IMR-90 (cell line): ENCODE measurements at regions of chr5 and their contacts with region 1.

Region 1: GRCh38 chr5:154857530-154858296 is 714 bp upstream of the CNOT8 start:
- DNase-seq: peak; percentile 96
- ATAC-seq: peak; percentile 81
- H3K4me3 ChIP-seq: peak overlapping the region; percentile 61
- H3K27ac ChIP-seq: peak overlapping the region; percentile 94
- H3K4me1 ChIP-seq: peaks cover 1% of the 10 kb centered on the region; the same call in 1 of the 2 replicates
- H3K27me3 ChIP-seq: no peaks in the 10 kb centered on the region
- CTCF ChIP-seq: 0 out of 2 replicates have a peak, but pooled peaks have one; percentile 0
- POLR2A ChIP-seq: peak; percentile 80
- RAD21 ChIP-seq: no peak

Region 2: DNA sequence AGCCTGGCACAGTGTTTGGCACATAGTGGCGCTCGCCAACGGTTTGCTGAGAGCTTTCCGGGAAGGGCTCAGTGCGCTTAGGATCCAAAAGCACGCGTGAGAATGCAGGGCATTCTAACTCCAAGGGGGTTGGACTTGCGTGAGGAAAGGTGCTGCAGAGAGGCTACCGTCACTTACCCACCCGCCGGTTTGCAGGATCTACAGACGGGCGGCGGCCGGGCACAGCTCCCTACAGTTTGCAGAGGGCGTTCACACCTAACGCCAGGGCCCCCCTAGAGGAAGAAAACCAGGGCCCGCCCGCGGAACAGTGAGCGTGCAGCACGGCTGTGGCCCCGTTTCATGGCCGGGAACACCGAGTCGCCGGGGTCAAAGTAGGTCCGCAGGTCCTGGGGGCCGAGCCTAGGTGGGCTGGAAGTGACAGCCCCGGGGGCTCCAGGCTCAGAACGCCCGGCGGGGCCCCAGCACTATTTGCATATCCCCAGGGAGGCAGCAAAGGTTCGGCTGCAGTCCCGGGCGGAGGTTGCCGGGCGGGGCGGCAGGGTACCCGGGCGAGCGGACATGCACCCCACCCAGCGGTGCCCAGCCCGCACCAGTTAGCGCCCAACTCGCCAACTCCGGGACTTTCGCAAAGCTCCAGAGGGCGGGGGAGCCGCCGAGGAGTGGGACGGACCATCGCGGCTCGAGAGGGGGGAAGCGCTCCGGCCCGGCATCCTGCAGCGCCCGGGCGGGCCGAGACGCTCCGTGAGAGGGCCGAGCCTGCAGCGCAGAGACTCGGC is 667.7 kb before region 1 on chr5:
- CTCF ChIA-PET with region 1: no interaction called
- POLR2A ChIA-PET with region 1: no interaction called
- dilution Hi-C with region 1: no loop called
- in situ Hi-C with region 1: no loop called
- intact Hi-C with region 1: loop called (anchors 5 kb)
- DNase-seq: peak; percentile 66
- ATAC-seq: peak; percentile 90
- H3K4me3 ChIP-seq: peak overlapping the region; percentile 80
- H3K27ac ChIP-seq: peak overlapping the region; percentile 74
- H3K4me1 ChIP-seq: peaks cover 15% of the 10 kb centered on the region
- H3K27me3 ChIP-seq: no peaks in the 10 kb centered on the region
- CTCF ChIP-seq: peak; percentile 39
- POLR2A ChIP-seq: no peak
- RAD21 ChIP-seq: peak; percentile 26

Region 3: GRCh38 chr5:154647114-154647760 is 210.5 kb before region 1 on chr5:
- CTCF ChIA-PET with region 1: interaction called, 4 read pairs
- POLR2A ChIA-PET with region 1: no interaction called
- dilution Hi-C with region 1: no loop called
- in situ Hi-C with region 1: no loop called
- intact Hi-C with region 1: loop called (anchors 2 kb)
- DNase-seq: peak; percentile 12
- ATAC-seq: peak; percentile 25; the same call in 1 of the 2 replicates
- H3K4me3 ChIP-seq: no peak overlapping the region
- H3K27ac ChIP-seq: no peak overlapping the region
- H3K4me1 ChIP-seq: no peaks in the 10 kb centered on the region
- H3K27me3 ChIP-seq: peaks cover 5% of the 10 kb centered on the region
- CTCF ChIP-seq: no peak
- POLR2A ChIP-seq: no peak
- RAD21 ChIP-seq: no peak

Region 4: GRCh38 chr5:154791535-154791934 is 66.2 kb before region 1 on chr5:
- CTCF ChIA-PET with region 1: no interaction called
- POLR2A ChIA-PET with region 1: no interaction called
- dilution Hi-C with region 1: no loop called
- in situ Hi-C with region 1: no loop called
- intact Hi-C with region 1: loop called (anchors 2 kb)
- DNase-seq: no peak
- ATAC-seq: no peak
- H3K4me3 ChIP-seq: no peak overlapping the region
- H3K27ac ChIP-seq: no peak overlapping the region
- H3K4me1 ChIP-seq: peaks cover 28% of the 10 kb centered on the region
- H3K27me3 ChIP-seq: no peaks in the 10 kb centered on the region
- CTCF ChIP-seq: no peak
- POLR2A ChIP-seq: no peak
- RAD21 ChIP-seq: no peak